ENCODE measurements at regions of chr3 and their contacts with region 1.

Region 1: DNA sequence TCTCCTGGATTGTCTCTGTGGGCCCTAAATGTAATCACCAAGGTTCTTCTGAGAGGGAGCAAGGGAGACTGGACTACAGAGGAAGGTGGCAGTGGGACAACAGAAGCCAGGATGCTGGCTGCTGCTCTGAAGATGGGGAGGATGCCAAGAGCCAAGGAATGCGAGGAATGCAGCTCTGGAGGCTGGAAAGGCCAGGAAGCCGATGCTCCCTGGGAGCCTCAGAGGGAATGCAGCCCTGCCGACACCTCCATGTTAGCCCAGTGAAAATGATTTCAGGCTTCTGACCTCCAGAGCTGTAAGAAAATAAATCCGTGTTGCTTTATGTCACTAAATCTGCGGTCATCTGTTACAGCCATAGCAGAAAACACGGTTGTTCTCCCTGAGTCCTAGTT is 44.1 kb downstream of the UMPS start:
- DNase-seq: peak in 1 of 2 experiments; percentile 57
- H3K4me3 ChIP-seq: no peak overlapping the region
- H3K27ac ChIP-seq: no peak overlapping the region
- H3K4me1 ChIP-seq: peaks cover 5% of the 10 kb centered on the region; the same call in 1 of the 2 replicates
- H3K27me3 ChIP-seq: no peaks in the 10 kb centered on the region
- CTCF ChIP-seq: no peak

Region 2: DNA sequence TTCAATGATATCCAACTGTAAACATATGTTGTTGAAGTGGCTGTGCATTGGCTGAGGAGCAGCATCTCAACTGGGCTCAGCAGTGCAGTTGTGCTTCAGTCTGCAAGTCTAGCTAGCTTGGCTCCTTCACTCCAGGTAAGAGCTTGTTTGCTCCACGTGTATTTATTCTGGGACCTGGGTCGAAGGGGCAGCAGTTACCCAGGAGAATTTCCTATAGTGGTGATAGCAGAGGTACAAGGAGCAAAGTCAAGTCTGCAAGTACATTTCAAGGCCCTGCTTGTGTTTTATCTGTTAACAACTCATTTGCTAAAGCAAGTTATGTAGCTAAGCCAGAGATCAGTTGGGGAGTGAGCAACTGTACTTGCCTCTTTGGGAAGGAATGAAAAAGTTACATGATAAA is 330.2 kb before region 1 on chr3:
- CTCF ChIA-PET with region 1: no interaction called
- POLR2A ChIA-PET with region 1: interaction called, 10 read pairs
- intact Hi-C with region 1: no loop called
- DNase-seq: no peak
- H3K4me3 ChIP-seq: no peak overlapping the region
- H3K27ac ChIP-seq: no peak overlapping the region
- H3K4me1 ChIP-seq: no peaks in the 10 kb centered on the region
- H3K27me3 ChIP-seq: peaks cover 56% of the 10 kb centered on the region
- CTCF ChIP-seq: no peak

Region 3: GRCh38 chr3:124707656-124708062 is 66.7 kb before region 1 on chr3:
- CTCF ChIA-PET with region 1: no interaction called
- POLR2A ChIA-PET with region 1: no interaction called
- intact Hi-C with region 1: no loop called
- DNase-seq: peak in 1 of 2 experiments; percentile 35
- H3K4me3 ChIP-seq: no peak overlapping the region
- H3K27ac ChIP-seq: no peak overlapping the region
- H3K4me1 ChIP-seq: peaks cover 9% of the 10 kb centered on the region
- H3K27me3 ChIP-seq: no peaks in the 10 kb centered on the region
- CTCF ChIP-seq: no peak

Region 4: DNA sequence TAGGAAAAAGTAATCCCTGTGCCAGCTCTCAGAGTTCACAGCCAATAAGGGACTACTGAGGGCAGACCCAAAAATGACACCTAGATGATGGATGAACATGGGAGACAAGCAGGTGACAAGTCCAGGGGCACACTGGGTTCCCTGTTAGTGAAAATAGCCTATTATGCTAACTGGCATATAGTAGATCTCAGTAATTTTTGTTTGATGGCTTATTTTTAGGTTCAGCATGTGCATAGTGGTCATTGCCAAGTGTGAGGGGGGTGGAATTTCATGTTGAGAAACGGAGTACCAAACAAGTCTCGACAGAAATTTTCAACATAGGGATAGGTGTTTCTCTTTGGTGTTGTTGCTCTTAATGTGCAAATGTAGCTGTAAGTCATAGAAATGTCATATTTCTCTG is 119.2 kb after region 1 on chr3:
- CTCF ChIA-PET with region 1: no interaction called
- POLR2A ChIA-PET with region 1: no interaction called
- intact Hi-C with region 1: no loop called
- DNase-seq: no peak
- H3K4me3 ChIP-seq: no peak overlapping the region
- H3K27ac ChIP-seq: no peak overlapping the region
- H3K4me1 ChIP-seq: no peaks in the 10 kb centered on the region
- H3K27me3 ChIP-seq: no peaks in the 10 kb centered on the region
- CTCF ChIP-seq: no peak

Region 5: GRCh38 chr3:125386811-125387210 is 612.5 kb after region 1 on chr3:
- CTCF ChIA-PET with region 1: no interaction called
- POLR2A ChIA-PET with region 1: interaction called, 15 read pairs
- intact Hi-C with region 1: no loop called
- DNase-seq: no peak
- H3K4me3 ChIP-seq: no peak overlapping the region
- H3K27ac ChIP-seq: no peak overlapping the region
- H3K4me1 ChIP-seq: peaks cover 6% of the 10 kb centered on the region; the same call in 1 of the 2 replicates
- H3K27me3 ChIP-seq: no peaks in the 10 kb centered on the region
- CTCF ChIP-seq: no peak

Region 6: GRCh38 chr3:126100634-126101301 is 1326.4 kb after region 1 on chr3:
- CTCF ChIA-PET with region 1: no interaction called
- POLR2A ChIA-PET with region 1: no interaction called
- intact Hi-C with region 1: no loop called
- DNase-seq: no peak
- H3K4me3 ChIP-seq: no peak overlapping the region
- H3K27ac ChIP-seq: no peak overlapping the region
- H3K4me1 ChIP-seq: no peaks in the 10 kb centered on the region
- H3K27me3 ChIP-seq: no peaks in the 10 kb centered on the region
- CTCF ChIP-seq: no peak

Measured in PC-9 (cell line).